ENCODE measurements at regions of chr1 and their contacts with region 1.

Region 1: DNA sequence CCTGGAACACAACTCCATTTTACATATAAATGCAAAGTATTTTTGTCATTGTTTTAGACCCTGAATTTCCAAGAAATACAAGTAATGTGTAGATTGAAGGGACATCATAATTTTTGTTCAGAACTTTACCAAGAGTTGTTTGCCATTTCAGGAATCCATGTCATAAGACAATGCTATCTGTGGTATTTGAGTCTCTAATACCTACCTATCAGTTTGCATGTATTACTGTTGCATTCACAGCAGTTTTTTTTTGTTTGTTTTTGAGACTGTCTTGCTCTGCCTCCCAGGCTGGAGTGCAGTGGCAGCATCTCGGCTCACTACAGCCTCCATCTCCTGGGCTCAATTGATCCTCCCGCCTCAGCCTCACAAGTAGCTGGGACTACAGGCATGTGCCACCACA is 17.1 kb downstream of the MPZ start:
- DNase-seq: no peak
- H3K4me3 ChIP-seq: no peak overlapping the region
- H3K27me3 ChIP-seq: peaks cover 2% of the 10 kb centered on the region; the same call in 1 of the 2 replicates
- CTCF ChIP-seq: no peak

Region 2: DNA sequence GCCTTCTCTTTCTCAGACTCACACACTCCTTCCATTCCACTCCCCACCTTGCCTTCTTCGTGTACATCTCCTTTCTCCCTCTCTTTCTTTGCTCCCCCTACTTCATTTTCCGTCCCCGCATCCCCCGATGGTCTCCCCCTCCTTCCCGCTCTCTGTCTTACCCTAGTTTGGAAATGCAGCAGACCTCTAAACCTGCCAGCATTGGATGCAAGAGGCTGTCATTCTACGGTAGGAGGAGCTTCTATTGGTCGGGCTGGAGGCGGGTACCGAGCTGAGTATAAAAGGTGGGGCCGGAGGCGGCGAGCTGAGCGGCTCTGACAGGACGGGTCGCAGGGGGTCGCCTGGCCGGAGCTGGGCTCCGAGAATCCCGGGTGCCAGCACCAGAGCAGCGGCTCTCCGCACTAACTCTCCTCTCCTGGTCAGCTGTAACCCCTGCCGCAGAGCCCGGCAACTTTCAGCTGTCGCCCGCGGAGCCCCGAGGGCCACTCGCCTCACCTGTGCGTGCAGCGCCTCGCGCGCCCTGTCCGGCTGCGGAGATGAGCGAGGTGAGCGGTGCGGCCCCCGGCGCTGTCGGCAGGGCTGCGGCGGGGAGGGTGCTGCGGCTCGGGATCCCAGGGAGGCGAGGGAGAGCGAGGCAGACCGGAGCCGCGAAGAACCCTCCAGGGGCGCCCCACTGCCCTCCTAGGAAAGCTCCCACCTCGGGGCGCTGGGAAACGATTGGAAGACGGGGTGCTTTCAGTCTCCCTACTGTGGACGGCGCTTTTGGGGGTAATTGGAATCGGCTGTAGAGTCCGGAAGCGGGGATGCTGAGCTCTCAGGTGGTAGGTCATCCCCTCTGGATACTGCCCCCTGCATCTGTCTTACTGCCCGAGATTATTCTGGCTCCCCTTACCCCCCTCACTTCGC is 33.9 kb before region 1 on chr1 and contains the start of gene PCP4L1:
- CTCF ChIA-PET with region 1: interaction called, 13 read pairs
- POLR2A ChIA-PET with region 1: no interaction called
- DNase-seq: no peak
- H3K4me3 ChIP-seq: peak within 1 kb of the TSS; percentile 35
- H3K27me3 ChIP-seq: peaks cover 32% of the 10 kb centered on the region
- CTCF ChIP-seq: no peak
- polyA plus RNA-seq, gene PCP4L1: not detected in 2 replicates

Region 3: GRCh38 chr1:161305867-161306519 is 13.4 kb after region 1 on chr1:
- CTCF ChIA-PET with region 1: interaction called, 22 read pairs
- POLR2A ChIA-PET with region 1: no interaction called
- DNase-seq: no peak
- H3K4me3 ChIP-seq: peak overlapping the region; percentile 67
- H3K27me3 ChIP-seq: 0 out of 2 replicates have a peak, but pooled peaks cover 1% of the 10 kb centered on the region
- CTCF ChIP-seq: peak; percentile 36

Region 4: DNA sequence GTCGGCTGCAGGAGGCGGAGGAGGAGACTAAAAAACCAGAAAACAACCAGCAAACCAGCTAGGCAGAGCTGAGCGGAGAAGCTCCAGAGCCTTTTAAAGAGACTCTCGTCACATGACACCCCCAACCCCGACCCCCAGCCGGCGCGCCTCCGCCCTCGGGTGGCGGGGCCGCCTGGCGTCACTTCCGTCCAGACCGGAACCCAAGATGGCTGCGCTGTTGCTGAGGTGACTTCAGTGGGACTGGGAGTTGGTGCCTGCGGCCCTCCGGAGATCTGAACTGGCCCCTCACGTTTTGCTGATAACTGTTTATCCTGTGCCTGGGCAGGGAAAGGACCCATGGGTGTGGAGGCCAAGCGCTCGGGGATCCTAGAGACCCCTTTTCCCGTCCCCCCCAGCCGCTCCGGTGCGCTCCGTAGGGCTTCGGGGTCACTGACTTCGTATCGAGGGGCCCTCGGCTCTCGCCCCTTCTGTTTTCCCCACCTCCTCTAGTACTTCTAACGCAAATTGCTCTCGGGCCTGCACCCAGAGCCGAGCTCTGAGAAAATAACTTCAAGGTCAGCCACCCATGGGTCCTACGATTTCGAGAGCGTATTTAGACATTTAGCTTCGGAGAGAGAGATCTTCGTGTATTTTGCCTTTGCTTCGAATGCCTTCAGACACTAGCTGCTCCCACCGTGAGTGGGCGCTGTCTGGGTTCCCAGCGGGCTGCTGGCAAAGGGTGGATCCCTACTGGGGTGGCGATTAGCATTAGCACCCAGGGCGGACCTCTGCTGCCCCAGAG is 21.8 kb after region 1 on chr1 and contains the start of gene SDHC:
- CTCF ChIA-PET with region 1: interaction called, 14 read pairs
- POLR2A ChIA-PET with region 1: no interaction called
- DNase-seq: peak; percentile 49
- H3K4me3 ChIP-seq: peak within 1 kb of the TSS; percentile 88
- H3K27me3 ChIP-seq: 0 out of 2 replicates have a peak, but pooled peaks cover 1% of the 10 kb centered on the region
- CTCF ChIP-seq: peak; percentile 61
- polyA plus RNA-seq, gene SDHC: 275 and 315 TPM in 2 replicates